ENCODE measurements at regions of chr1 and their contacts with region 1.

Region 1: GRCh38 chr1:226126824-226127569 is 59.5 kb downstream of the ACBD3 start:
- DNase-seq: no peak
- ATAC-seq: no peak
- H3K4me3 ChIP-seq: no peak overlapping the region
- H3K27ac ChIP-seq: peak overlapping the region in 3 of 10 donors; percentile 22 to 44 (median 31)
- H3K4me1 ChIP-seq: peaks cover 0 to 21% (median 10%) of the 10 kb centered on the region in 9 donors
- H3K27me3 ChIP-seq: peaks cover 0 to 11% (median 0%) of the 10 kb centered on the region in 7 donors
- CTCF ChIP-seq: no peak

Region 2: GRCh38 chr1:226201029-226201593 is 74.1 kb after region 1 on chr1:
- intact Hi-C with region 1: loop called (anchors 1 to 5 kb)
- DNase-seq: no peak
- ATAC-seq: no peak
- H3K4me3 ChIP-seq: no peak overlapping the region
- H3K27ac ChIP-seq: no peak overlapping the region
- H3K4me1 ChIP-seq: peaks cover 0 to 4% (median 0%) of the 10 kb centered on the region in 9 donors
- H3K27me3 ChIP-seq: peaks cover 0 to 21% (median 0%) of the 10 kb centered on the region in 7 donors
- CTCF ChIP-seq: peak in 2 of 9 donors; percentile 15 to 34

Measured in heart right ventricle (tissue), 16 donors.